ENCODE measurements at regions of chr12 and their contacts with region 1.

Region 1: GRCh38 chr12:40312982-40313576 is 88.3 kb downstream of the LRRK2 start:
- DNase-seq: no peak
- ATAC-seq: no peak
- H3K4me3 Mint-ChIP-seq: no peak overlapping the region
- H3K27ac Mint-ChIP-seq: no peak overlapping the region
- H3K4me1 Mint-ChIP-seq: no peaks in the 10 kb centered on the region
- H3K27me3 Mint-ChIP-seq: no peaks in the 10 kb centered on the region
- CTCF ChIP-seq: peak; percentile 23

Region 2: DNA sequence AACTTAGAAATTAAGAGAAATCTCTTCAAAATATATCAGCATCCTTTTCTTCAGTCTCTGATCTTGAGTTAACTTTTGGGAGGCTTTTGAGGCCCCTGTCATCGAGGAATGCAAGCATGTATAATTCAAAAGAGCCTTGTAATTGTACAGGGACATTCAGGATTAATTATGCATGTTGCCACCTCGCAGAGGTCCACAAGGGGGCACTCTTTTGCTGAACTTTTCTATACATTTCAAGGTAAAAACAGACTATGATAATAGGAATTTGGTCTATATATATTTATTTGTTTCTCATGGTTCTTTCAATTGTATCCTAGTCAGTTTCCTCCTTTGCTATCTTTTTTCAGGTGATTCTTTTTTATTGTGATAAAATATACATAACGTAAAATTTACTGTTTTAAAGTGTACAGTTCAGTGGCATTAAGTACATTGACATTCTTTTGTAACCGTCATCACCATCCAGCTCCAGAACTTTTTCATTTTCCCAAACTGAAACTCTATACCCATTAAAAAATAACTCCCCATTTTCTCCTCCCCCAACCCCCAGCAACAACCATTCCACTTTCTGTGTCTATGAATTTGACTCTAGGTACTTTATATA is 160.2 kb before region 1 on chr12:
- CTCF ChIA-PET with region 1: interaction called, 6 read pairs
- POLR2A ChIA-PET with region 1: interaction called, 3 read pairs
- intact Hi-C with region 1: loop called (anchors 5 kb)
- DNase-seq: peak; percentile 74
- ATAC-seq: peak; percentile 39
- H3K4me3 Mint-ChIP-seq: no peak overlapping the region
- H3K27ac Mint-ChIP-seq: no peak overlapping the region
- H3K4me1 Mint-ChIP-seq: no peaks in the 10 kb centered on the region
- H3K27me3 Mint-ChIP-seq: peaks cover 8% of the 10 kb centered on the region
- CTCF ChIP-seq: peak; percentile 89